ENCODE measurements at regions of chr19 and their contacts with region 1.

Region 1: GRCh38 chr19:44689056-44689895 is 9.7 kb upstream of the CEACAM16 start:
- DNase-seq: peak; percentile 90
- H3K4me3 ChIP-seq: no peak overlapping the region
- H3K27ac ChIP-seq: peak overlapping the region; percentile 11
- H3K4me1 ChIP-seq: peaks cover 4% of the 10 kb centered on the region
- H3K27me3 ChIP-seq: no peaks in the 10 kb centered on the region
- CTCF ChIP-seq: peak; percentile 90

Region 2: GRCh38 chr19:44723952-44724319 is 34.7 kb after region 1 on chr19:
- intact Hi-C with region 1: loop called (anchors 5 kb)
- DNase-seq: peak; percentile 92
- H3K4me3 ChIP-seq: peak overlapping the region; percentile 34
- H3K27ac ChIP-seq: peak overlapping the region; percentile 89
- H3K4me1 ChIP-seq: peaks cover 10% of the 10 kb centered on the region
- H3K27me3 ChIP-seq: no peaks in the 10 kb centered on the region
- CTCF ChIP-seq: peak; percentile 95

Region 3: GRCh38 chr19:44770550-44771257 is 81.4 kb after region 1 on chr19:
- intact Hi-C with region 1: loop called (anchors 5 kb)
- DNase-seq: peak; percentile 99
- H3K4me3 ChIP-seq: no peak overlapping the region
- H3K27ac ChIP-seq: peak overlapping the region; percentile 20
- H3K4me1 ChIP-seq: peaks cover 5% of the 10 kb centered on the region
- H3K27me3 ChIP-seq: no peaks in the 10 kb centered on the region
- CTCF ChIP-seq: peak; percentile 83

Region 4: GRCh38 chr19:44845612-44846454 is 156.6 kb after region 1 on chr19 and contains the start of gene NECTIN2:
- intact Hi-C with region 1: loop called (anchors 2 kb)
- DNase-seq: peak; percentile 100
- H3K4me3 ChIP-seq: peak within 1 kb of the TSS; percentile 85
- H3K27ac ChIP-seq: peak within 1 kb of the TSS; percentile 91
- H3K4me1 ChIP-seq: peaks cover 5% of the 10 kb centered on the region
- H3K27me3 ChIP-seq: no peaks in the 10 kb centered on the region
- CTCF ChIP-seq: peak; percentile 39
- total RNA-seq, gene NECTIN2: 115 to 121 TPM